Dorsolateral prefrontal cortex (tissue), 120 donors: ENCODE measurements at regions of chr7 and their contacts with region 1.

Region 1: GRCh38 chr7:141737834-141738591 is at the start of gene SSBP1:
- DNase-seq: peak; percentile 77 to 93 (median 90)
- H3K4me3 ChIP-seq: peak within 1 kb of the TSS; percentile 57 to 96 (median 81)
- H3K27ac ChIP-seq: peak within 1 kb of the TSS; percentile 5 to 90 (median 80)
- H3K27me3 ChIP-seq: no peaks in the 10 kb centered on the region
- CTCF ChIP-seq: peak; percentile 70 to 94 (median 85)
- total RNA-seq, gene SSBP1: 49.9 to 96.9 (median 80.2) TPM

Region 2: DNA sequence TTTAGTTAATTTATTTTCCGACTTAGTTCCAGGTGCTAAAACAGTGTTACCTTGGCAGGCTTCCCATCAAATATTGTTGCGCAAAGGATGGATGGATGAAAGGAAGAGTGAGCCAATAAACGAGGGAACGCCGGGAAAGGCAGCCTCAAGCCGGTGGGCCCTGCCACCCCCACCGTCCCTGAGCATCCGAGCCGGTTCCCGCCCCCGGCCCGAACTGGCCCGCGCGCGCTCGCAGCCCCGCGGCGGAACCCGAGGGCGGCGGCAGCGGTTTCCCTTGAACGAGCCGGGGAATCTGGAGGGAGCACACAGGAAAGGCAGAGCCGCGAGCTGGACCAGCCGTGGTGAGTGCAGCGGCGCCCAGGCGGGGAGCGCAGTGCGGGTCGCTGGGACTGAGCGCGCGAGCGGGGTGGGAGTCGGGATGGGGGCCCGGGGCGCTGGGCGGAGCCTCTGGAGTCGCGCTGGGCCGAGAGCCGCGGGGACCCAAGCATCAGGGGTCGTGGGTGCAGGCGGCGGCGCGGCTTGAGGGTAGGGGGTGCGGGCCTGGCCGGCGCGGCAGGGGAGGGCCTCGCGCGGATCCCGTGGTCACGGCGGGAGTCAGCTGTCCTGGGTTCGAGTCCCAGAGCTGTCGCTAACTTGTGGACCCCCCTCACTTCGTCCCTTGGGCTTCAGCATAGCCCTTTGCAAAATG is 186.8 kb before region 1 on chr7 and contains the start of gene AGK:
- intact Hi-C with region 1: loop called (anchors 10 kb)
- DNase-seq: peak; percentile 54 to 87 (median 69)
- H3K4me3 ChIP-seq: peak within 1 kb of the TSS; percentile 62 to 98 (median 89)
- H3K27ac ChIP-seq: peak within 1 kb of the TSS in 58 of 59 donors; percentile 17 to 91 (median 68)
- H3K27me3 ChIP-seq: no peaks in the 10 kb centered on the region
- CTCF ChIP-seq: peak in 40 of 56 donors; percentile 7 to 60 (median 26)
- total RNA-seq, gene AGK: 33.6 to 74.7 (median 51.5) TPM

Region 3: GRCh38 chr7:141701489-141702046 is 36.4 kb before region 1 on chr7:
- intact Hi-C with region 1: loop called (anchors 5 kb)
- DNase-seq: peak in 5 of 10 donors; percentile 31 to 62 (median 44)
- H3K4me3 ChIP-seq: peak overlapping the region; percentile 33 to 88 (median 76)
- H3K27ac ChIP-seq: peak overlapping the region in 57 of 59 donors; percentile 43 to 98 (median 92)
- H3K27me3 ChIP-seq: no peaks in the 10 kb centered on the region
- CTCF ChIP-seq: peak in 1 of 56 donors; percentile 9

Region 4: GRCh38 chr7:141785706-141786552 is 47.9 kb after region 1 on chr7:
- intact Hi-C with region 1: loop called in 1 of 2 experiments (anchors 10 kb)
- DNase-seq: peak in 3 of 10 donors; percentile 5 to 44 (median 24)
- H3K4me3 ChIP-seq: no peak overlapping the region
- H3K27ac ChIP-seq: no peak overlapping the region
- H3K27me3 ChIP-seq: no peaks in the 10 kb centered on the region
- CTCF ChIP-seq: peak; percentile 45 to 82 (median 70)